Activated CD4-positive, alpha-beta T cell treated with anti-CD3 and anti-CD28 coated beads for 36 hours (primary cell): ENCODE measurements at regions of chr11 and their contacts with region 1.

Region 1: GRCh38 chr11:128522055-128522942 is 65.1 kb downstream of the ETS1 start:
- DNase-seq: peak; percentile 95
- ATAC-seq: peak; percentile 70
- H3K4me3 Mint-ChIP-seq: peak overlapping the region; percentile 96
- H3K27ac Mint-ChIP-seq: peak overlapping the region; percentile 99
- H3K4me1 Mint-ChIP-seq: peaks cover 42% of the 10 kb centered on the region
- H3K27me3 Mint-ChIP-seq: no peaks in the 10 kb centered on the region

Region 2: GRCh38 chr11:128039140-128040021 is 482.9 kb before region 1 on chr11:
- CTCF ChIA-PET with region 1: interaction called, 3 read pairs
- POLR2A ChIA-PET with region 1: no interaction called
- intact Hi-C with region 1: loop called in 1 of 2 experiments (anchors 5 kb)
- DNase-seq: peak; percentile 88
- ATAC-seq: peak; percentile 94
- H3K4me3 Mint-ChIP-seq: peak overlapping the region; percentile 31
- H3K27ac Mint-ChIP-seq: peak overlapping the region; percentile 85
- H3K4me1 Mint-ChIP-seq: peaks cover 39% of the 10 kb centered on the region
- H3K27me3 Mint-ChIP-seq: no peaks in the 10 kb centered on the region

Region 3: GRCh38 chr11:128146926-128147605 is 375.2 kb before region 1 on chr11:
- CTCF ChIA-PET with region 1: no interaction called
- POLR2A ChIA-PET with region 1: no interaction called
- intact Hi-C with region 1: no loop called
- DNase-seq: no peak
- ATAC-seq: no peak
- H3K4me3 Mint-ChIP-seq: no peak overlapping the region
- H3K27ac Mint-ChIP-seq: no peak overlapping the region
- H3K4me1 Mint-ChIP-seq: no peaks in the 10 kb centered on the region
- H3K27me3 Mint-ChIP-seq: no peaks in the 10 kb centered on the region

Region 4: DNA sequence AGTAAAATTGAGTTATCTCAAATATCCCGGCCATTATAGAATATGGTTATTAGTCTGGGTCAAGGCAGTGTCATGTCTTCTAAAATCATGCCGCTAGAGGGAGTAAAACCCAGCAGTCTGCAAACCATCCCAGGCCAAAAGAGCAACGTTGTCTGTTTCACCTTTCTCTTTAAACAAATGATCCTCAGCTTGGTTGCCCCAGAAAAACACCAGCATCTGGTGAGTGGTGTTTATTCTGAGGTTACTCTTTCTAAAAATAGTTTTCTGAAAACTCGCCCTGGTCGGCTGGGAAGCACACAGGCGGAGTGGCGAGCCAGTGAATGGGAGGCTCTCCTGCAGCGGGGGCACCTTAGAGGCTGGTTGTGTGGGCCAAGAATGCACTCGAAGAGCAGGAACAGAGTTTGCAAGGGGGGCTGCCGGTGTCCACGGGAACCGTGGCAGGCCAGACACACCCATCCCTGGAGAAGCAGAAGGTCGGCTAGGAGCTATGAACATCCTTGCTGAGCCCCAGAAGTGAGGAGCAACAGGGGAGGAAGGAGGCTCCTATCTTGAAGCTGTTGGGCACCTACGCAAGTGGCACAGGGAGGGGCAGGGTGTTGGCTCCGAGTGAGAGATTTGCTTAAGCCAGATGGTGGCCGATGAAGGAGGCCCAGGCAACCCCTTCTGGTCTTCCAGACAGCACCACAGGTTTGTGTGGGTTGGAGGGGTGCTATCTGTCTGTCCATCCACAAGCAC is 232.0 kb before region 1 on chr11:
- CTCF ChIA-PET with region 1: interaction called, 31 read pairs
- POLR2A ChIA-PET with region 1: interaction called, 11 read pairs
- intact Hi-C with region 1: loop called (anchors 1 kb)
- DNase-seq: peak; percentile 80
- ATAC-seq: peak; percentile 54
- H3K4me3 Mint-ChIP-seq: peak overlapping the region; percentile 78
- H3K27ac Mint-ChIP-seq: peak overlapping the region; percentile 98
- H3K4me1 Mint-ChIP-seq: peaks cover 98% of the 10 kb centered on the region
- H3K27me3 Mint-ChIP-seq: no peaks in the 10 kb centered on the region

Region 5: GRCh38 chr11:128472128-128473089 is 49.9 kb before region 1 on chr11:
- CTCF ChIA-PET with region 1: interaction called, 11 read pairs
- POLR2A ChIA-PET with region 1: interaction called, 29 read pairs
- intact Hi-C with region 1: loop called (anchors 1 to 2 kb)
- DNase-seq: peak; percentile 83
- ATAC-seq: peak; percentile 67
- H3K4me3 Mint-ChIP-seq: peak overlapping the region; percentile 72
- H3K27ac Mint-ChIP-seq: peak overlapping the region; percentile 99
- H3K4me1 Mint-ChIP-seq: peaks cover 97% of the 10 kb centered on the region
- H3K27me3 Mint-ChIP-seq: no peaks in the 10 kb centered on the region

Region 6: GRCh38 chr11:128535468-128536457 is 13.5 kb after region 1 on chr11:
- CTCF ChIA-PET with region 1: interaction called, 11 read pairs
- POLR2A ChIA-PET with region 1: interaction called, 4 read pairs
- intact Hi-C with region 1: no loop called
- DNase-seq: no peak
- ATAC-seq: no peak
- H3K4me3 Mint-ChIP-seq: no peak overlapping the region
- H3K27ac Mint-ChIP-seq: no peak overlapping the region
- H3K4me1 Mint-ChIP-seq: peaks cover 27% of the 10 kb centered on the region
- H3K27me3 Mint-ChIP-seq: no peaks in the 10 kb centered on the region

Region 7: GRCh38 chr11:128624269-128625175 is 102.2 kb after region 1 on chr11:
- CTCF ChIA-PET with region 1: interaction called, 63 read pairs
- POLR2A ChIA-PET with region 1: interaction called, 10 read pairs
- intact Hi-C with region 1: loop called in 1 of 2 experiments (anchors 1 kb)
- DNase-seq: peak; percentile 70
- ATAC-seq: peak; percentile 35
- H3K4me3 Mint-ChIP-seq: peak overlapping the region; percentile 58
- H3K27ac Mint-ChIP-seq: peak overlapping the region; percentile 90
- H3K4me1 Mint-ChIP-seq: peaks cover 95% of the 10 kb centered on the region
- H3K27me3 Mint-ChIP-seq: no peaks in the 10 kb centered on the region